ENCODE measurements at regions of chr17 and their contacts with region 1.

Region 1: GRCh38 chr17:40718934-40719333 is 15.4 kb upstream of the KRT24 start:
- DNase-seq: no peak
- ATAC-seq: no peak
- H3K4me3 Mint-ChIP-seq: no peak overlapping the region
- H3K27ac Mint-ChIP-seq: no peak overlapping the region
- H3K4me1 Mint-ChIP-seq: no peaks in the 10 kb centered on the region
- H3K27me3 Mint-ChIP-seq: peaks cover 13% of the 10 kb centered on the region
- CTCF ChIP-seq: no peak

Region 2: DNA sequence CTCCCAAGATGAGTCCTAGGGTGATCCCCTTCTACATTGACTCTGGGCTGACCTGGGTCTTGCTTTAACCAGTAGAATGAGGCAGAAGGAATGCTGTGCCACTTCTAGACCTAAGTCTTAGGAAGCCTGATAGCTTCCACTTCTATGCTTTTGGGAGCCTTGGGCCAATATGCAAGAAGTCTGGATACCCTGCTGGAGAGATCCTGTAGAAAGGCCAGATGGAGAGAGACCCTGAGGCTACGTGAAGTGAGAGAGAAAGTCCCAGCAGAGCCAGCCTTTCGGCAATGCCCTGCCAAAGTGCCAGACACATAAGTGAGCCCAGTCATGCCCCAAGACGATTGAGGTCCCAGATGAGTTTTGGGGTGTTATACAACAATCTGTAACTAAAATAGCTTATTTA is 55.7 kb before region 1 on chr17:
- CTCF ChIA-PET with region 1: no interaction called
- POLR2A ChIA-PET with region 1: no interaction called
- intact Hi-C with region 1: no loop called
- DNase-seq: no peak
- ATAC-seq: no peak
- H3K4me3 Mint-ChIP-seq: no peak overlapping the region
- H3K27ac Mint-ChIP-seq: no peak overlapping the region
- H3K4me1 Mint-ChIP-seq: peaks cover 6% of the 10 kb centered on the region
- H3K27me3 Mint-ChIP-seq: peaks cover 44% of the 10 kb centered on the region
- CTCF ChIP-seq: no peak

Region 3: DNA sequence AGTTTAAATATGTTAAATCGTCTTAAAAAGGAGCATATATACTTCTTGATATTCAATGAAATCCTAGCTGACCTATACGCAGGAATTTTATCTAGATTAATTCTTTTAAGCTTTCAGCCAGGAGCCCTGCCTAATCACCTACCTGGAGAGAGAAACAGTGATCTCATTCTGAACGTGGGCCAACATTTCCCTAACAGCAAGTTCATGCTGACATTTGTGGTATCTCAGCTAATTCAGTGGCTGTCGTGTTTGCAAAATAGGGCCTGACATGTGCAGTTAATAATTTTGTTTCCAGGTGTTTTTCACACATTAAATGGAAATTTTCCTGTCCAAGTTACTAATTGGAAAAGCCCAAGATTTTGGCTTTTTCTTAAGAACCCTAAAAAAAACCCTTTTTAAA is 32.7 kb before region 1 on chr17:
- CTCF ChIA-PET with region 1: no interaction called
- POLR2A ChIA-PET with region 1: no interaction called
- intact Hi-C with region 1: no loop called
- DNase-seq: no peak
- ATAC-seq: no peak
- H3K4me3 Mint-ChIP-seq: no peak overlapping the region
- H3K27ac Mint-ChIP-seq: no peak overlapping the region
- H3K4me1 Mint-ChIP-seq: no peaks in the 10 kb centered on the region
- H3K27me3 Mint-ChIP-seq: peaks cover 20% of the 10 kb centered on the region
- CTCF ChIP-seq: no peak

Region 4: GRCh38 chr17:40791787-40792436 is 73.0 kb after region 1 on chr17:
- CTCF ChIA-PET with region 1: interaction called, 3 read pairs
- POLR2A ChIA-PET with region 1: no interaction called
- intact Hi-C with region 1: loop called (anchors 5 kb)
- DNase-seq: no peak
- ATAC-seq: no peak
- H3K4me3 Mint-ChIP-seq: no peak overlapping the region
- H3K27ac Mint-ChIP-seq: no peak overlapping the region
- H3K4me1 Mint-ChIP-seq: no peaks in the 10 kb centered on the region
- H3K27me3 Mint-ChIP-seq: peaks cover 17% of the 10 kb centered on the region
- CTCF ChIP-seq: no peak